Caco-2 (cell line): ENCODE measurements at regions of chr1 and their contacts with region 1.

Region 1: DNA sequence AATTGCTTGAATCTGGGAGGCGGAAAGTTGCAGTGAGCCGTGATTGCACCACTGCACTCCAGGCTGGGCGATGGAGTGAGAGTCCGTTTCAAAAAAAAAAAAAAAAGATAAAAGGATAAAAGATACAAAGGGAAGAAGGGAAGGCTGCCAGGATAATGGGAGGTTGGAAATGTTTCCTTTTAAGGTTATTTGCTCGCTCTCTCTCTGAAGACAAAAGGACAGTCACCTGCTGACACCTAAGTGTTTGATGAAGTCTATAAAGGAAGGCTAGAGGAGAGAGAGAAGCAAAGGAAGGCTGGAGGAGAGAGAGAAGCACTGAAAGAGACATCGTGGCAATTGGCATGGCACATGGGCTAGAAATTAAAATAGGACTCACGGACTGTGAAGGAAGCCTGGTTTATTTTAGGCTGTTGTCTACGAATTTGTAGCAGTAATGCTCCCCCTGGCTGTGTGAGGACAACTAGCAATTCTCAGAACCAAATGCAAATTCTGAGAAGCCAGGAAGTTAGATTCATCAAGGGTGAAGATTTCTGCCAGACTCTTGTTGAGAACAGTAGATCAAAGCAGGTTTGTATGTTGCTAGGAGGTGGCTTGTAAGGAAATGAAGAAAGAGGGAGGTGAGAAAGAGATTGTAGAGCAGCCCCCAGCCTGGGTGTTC is 154.2 kb downstream of the ZP4 start:
- DNase-seq: peak in 1 of 2 experiments; percentile 6
- H3K4me3 ChIP-seq: no peak overlapping the region
- H3K4me3 Mint-ChIP-seq: no peak overlapping the region
- H3K27ac Mint-ChIP-seq: no peak overlapping the region
- H3K4me1 ChIP-seq: no peaks in the 10 kb centered on the region
- H3K4me1 Mint-ChIP-seq: peaks cover 4% of the 10 kb centered on the region
- H3K27me3 ChIP-seq: no peaks in the 10 kb centered on the region
- H3K27me3 Mint-ChIP-seq: no peaks in the 10 kb centered on the region
- CTCF ChIP-seq: peak; percentile 26 to 42

Region 2: DNA sequence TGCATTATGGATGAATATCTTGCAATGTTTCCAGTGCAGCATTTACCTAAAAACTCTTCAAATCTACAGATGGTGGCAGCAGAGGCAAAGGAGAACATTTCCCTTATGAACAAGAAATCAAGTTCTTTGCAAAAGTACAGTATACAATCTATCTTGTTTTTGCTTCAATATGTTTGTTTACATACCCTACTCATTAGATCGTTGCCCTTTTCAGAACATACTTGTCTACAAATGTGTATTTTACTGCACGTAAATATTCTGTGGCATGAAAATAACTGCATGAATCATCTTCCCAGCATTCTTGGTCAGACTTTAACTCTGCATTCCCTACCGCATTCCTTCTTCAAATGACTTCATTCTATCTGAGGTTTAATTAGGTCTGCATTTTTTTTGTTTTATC is 58.5 kb before region 1 on chr1:
- CTCF ChIA-PET with region 1: no interaction called
- POLR2A ChIA-PET with region 1: no interaction called
- intact Hi-C with region 1: loop called (anchors 1 kb)
- DNase-seq: peak in 1 of 2 experiments; percentile 26
- H3K4me3 ChIP-seq: no peak overlapping the region
- H3K4me3 Mint-ChIP-seq: no peak overlapping the region
- H3K27ac Mint-ChIP-seq: no peak overlapping the region
- H3K4me1 ChIP-seq: no peaks in the 10 kb centered on the region
- H3K4me1 Mint-ChIP-seq: peaks cover 8% of the 10 kb centered on the region
- H3K27me3 ChIP-seq: no peaks in the 10 kb centered on the region
- H3K27me3 Mint-ChIP-seq: no peaks in the 10 kb centered on the region
- CTCF ChIP-seq: peak; percentile 19 to 44